ENCODE measurements at regions of chr2 and their contacts with region 1.

Region 1: GRCh38 chr2:177148477-177149154 is 64.0 kb upstream of the HNRNPA3 start:
- DNase-seq: peak; percentile 88
- ATAC-seq: peak; percentile 97
- H3K4me3 Mint-ChIP-seq: peak overlapping the region; percentile 79
- H3K27ac Mint-ChIP-seq: no peak overlapping the region; the same call in 1 of the 2 replicates
- H3K4me1 Mint-ChIP-seq: peaks cover 31% of the 10 kb centered on the region
- H3K27me3 Mint-ChIP-seq: peaks cover 9% of the 10 kb centered on the region; the same call in 1 of the 2 replicates
- CTCF ChIP-seq: peak; percentile 81

Region 2: GRCh38 chr2:176454893-176455811 is 693.5 kb before region 1 on chr2:
- CTCF ChIA-PET with region 1: interaction called, 14 read pairs
- POLR2A ChIA-PET with region 1: no interaction called
- DNase-seq: peak; percentile 94
- ATAC-seq: peak; percentile 71
- H3K4me3 Mint-ChIP-seq: no peak overlapping the region
- H3K27ac Mint-ChIP-seq: no peak overlapping the region
- H3K4me1 Mint-ChIP-seq: peaks cover 22% of the 10 kb centered on the region
- H3K27me3 Mint-ChIP-seq: peaks cover 12% of the 10 kb centered on the region
- CTCF ChIP-seq: peak; percentile 97

Region 3: DNA sequence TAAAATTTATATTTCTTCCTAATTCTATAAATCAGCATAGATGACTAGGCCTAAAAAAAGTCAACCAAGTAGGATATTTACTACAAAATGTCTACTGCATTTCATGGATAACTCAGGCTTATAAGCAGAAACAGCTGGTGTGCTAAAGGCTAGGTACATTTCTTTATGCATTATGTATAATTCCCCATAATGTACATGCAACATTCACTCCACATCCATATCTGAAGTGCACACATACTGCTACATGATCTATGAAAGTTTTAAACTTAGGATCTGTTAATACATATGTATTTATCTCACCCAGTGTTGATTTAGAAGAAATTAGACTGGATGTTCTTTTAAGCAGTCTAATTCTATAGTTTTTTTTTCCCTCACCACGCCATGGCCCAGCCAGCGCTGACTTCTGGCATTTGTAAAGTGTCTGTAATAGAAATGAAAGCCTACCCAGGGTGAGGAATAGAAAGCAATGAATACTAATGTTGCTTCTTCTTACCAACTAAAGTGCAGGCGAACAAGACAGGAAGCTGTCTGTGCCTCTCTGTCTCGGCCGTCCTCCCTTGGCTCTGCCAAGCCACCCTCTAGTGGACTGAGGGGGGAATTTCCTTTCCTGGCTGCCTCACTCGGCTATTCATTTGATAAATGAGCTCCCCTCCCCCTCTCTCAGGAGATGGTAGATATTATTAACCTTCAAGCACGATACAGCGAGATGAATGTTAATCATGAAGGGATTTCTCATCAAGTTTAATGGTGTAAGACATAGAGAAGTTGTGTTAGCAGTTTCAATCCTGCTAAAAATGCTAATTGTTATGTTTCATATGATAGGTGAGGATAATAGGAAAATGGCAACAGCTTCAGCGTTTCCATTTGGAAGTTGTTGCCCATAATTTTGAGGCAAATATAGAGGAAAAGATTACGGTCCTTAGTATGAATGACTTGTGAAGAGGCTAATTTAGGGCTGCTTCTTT is 494.9 kb before region 1 on chr2:
- CTCF ChIA-PET with region 1: interaction called, 29 read pairs
- POLR2A ChIA-PET with region 1: no interaction called
- DNase-seq: peak; percentile 74
- ATAC-seq: peak; percentile 98
- H3K4me3 Mint-ChIP-seq: 0 out of 2 replicates have a peak overlapping the region, but pooled peaks have one; percentile 21
- H3K27ac Mint-ChIP-seq: no peak overlapping the region
- H3K4me1 Mint-ChIP-seq: peaks cover 39% of the 10 kb centered on the region
- H3K27me3 Mint-ChIP-seq: peaks cover 16% of the 10 kb centered on the region
- CTCF ChIP-seq: peak; percentile 91

Region 4: DNA sequence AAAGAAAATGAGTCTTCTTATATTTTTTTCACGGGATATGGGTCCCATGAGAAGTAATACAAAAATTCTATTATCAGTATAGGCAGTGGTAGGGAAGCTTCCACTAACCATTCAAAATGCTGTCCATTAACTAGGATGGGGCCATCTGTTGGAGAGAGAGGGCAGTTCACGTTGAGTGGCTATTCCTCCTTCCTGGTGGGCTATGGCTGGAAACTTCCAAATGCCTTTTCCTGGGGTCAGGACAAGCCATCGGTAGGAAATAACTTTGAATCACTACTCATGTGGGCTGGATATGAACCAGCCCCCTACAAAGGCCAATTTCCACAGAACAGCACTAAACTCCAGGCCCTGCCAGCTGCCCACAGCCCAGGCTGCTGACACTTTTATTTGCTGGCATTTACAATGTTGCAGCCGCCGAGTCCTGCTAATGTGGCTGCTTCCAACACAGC is 92.1 kb before region 1 on chr2:
- CTCF ChIA-PET with region 1: interaction called, 18 read pairs
- POLR2A ChIA-PET with region 1: no interaction called
- DNase-seq: peak; percentile 28
- ATAC-seq: peak; percentile 98
- H3K4me3 Mint-ChIP-seq: no peak overlapping the region
- H3K27ac Mint-ChIP-seq: no peak overlapping the region
- H3K4me1 Mint-ChIP-seq: no peaks in the 10 kb centered on the region
- H3K27me3 Mint-ChIP-seq: no peaks in the 10 kb centered on the region
- CTCF ChIP-seq: no peak

Region 5: GRCh38 chr2:177118636-177119035 is 30.0 kb before region 1 on chr2:
- CTCF ChIA-PET with region 1: interaction called, 23 read pairs
- POLR2A ChIA-PET with region 1: no interaction called
- DNase-seq: peak; percentile 55
- ATAC-seq: peak; percentile 75
- H3K4me3 Mint-ChIP-seq: no peak overlapping the region
- H3K27ac Mint-ChIP-seq: no peak overlapping the region
- H3K4me1 Mint-ChIP-seq: peaks cover 30% of the 10 kb centered on the region
- H3K27me3 Mint-ChIP-seq: no peaks in the 10 kb centered on the region
- CTCF ChIP-seq: no peak

Region 6: DNA sequence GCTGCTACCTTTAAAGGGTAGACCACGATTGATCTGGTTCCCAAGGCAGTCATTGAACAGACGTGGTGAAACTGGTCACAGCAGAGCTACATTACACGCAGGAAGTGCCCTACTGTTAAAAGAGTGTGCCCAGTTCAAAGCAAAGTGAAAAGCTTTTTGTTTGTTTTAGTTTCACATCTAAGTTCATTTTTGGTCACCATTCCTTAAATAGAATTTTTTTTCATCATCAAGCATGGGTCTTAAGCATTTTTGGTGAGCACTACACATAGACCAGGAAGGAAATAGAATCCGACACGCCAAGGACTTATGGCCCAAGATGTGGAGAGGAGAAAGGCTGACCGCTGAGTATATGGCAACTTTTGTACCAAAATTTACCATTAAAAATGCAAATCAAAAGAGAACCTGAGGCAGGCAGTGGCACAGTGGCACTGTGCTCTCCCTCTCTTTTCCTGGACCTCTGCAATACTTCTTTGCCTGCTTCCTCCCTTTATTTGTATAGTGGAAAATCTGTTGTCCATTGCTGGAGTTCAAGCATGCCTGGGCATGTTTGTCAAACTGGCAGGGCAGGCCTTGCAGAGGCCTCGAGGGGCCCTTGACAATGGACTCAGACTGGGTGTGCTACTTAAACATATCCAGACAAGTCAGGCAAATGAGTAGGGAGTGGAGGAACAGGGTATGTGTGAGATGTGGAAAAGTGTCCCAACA is 21.3 kb after region 1 on chr2:
- CTCF ChIA-PET with region 1: interaction called, 44 read pairs
- POLR2A ChIA-PET with region 1: interaction called, 3 read pairs
- DNase-seq: no peak
- ATAC-seq: no peak
- H3K4me3 Mint-ChIP-seq: no peak overlapping the region
- H3K27ac Mint-ChIP-seq: peak overlapping the region; percentile 96
- H3K4me1 Mint-ChIP-seq: peaks cover 38% of the 10 kb centered on the region
- H3K27me3 Mint-ChIP-seq: no peaks in the 10 kb centered on the region
- CTCF ChIP-seq: no peak

Region 7: DNA sequence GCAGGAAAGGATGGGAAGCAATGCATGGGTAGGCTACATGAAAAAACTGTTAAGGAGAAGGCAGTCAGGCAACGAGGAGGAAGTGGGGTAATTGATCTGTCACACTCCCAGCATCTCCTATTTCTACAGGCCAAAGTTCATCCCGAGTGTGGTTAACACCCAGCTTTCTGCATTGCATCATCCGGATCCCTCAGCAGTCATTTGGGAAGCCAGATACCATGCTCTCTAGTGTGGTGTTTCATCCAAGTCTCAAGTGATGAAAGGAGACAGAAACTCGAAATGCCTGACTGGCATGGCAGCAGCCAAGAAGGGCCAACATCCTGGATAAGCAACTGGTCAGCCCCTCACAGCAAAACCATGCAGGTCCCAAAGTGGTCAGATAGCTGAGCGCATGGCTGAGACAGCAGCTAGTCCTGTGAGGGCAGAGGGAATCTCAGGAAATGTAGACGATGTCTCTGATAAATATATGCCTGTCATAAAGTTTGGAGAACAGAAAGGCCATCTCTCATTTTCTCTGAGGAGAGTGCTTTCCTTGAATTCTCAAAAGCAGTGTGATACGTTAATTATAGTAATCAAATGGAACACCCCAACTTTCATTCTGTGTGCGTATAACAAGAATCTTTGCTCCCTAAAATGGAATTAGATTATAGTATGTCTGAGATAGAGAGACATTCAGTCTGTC is 39.2 kb after region 1 on chr2:
- CTCF ChIA-PET with region 1: no interaction called
- POLR2A ChIA-PET with region 1: no interaction called
- DNase-seq: no peak
- ATAC-seq: peak; percentile 60
- H3K4me3 Mint-ChIP-seq: no peak overlapping the region
- H3K27ac Mint-ChIP-seq: no peak overlapping the region
- H3K4me1 Mint-ChIP-seq: peaks cover 5% of the 10 kb centered on the region
- H3K27me3 Mint-ChIP-seq: no peaks in the 10 kb centered on the region; the same call in 1 of the 2 replicates
- CTCF ChIP-seq: no peak

Measured in WTC11 (cell line).